Activated CD4-positive, alpha-beta memory T cell treated with anti-CD3 and anti-CD28 coated beads for 36 hours (primary cell): ENCODE measurements at regions of chr17 and their contacts with region 1.

Region 1: DNA sequence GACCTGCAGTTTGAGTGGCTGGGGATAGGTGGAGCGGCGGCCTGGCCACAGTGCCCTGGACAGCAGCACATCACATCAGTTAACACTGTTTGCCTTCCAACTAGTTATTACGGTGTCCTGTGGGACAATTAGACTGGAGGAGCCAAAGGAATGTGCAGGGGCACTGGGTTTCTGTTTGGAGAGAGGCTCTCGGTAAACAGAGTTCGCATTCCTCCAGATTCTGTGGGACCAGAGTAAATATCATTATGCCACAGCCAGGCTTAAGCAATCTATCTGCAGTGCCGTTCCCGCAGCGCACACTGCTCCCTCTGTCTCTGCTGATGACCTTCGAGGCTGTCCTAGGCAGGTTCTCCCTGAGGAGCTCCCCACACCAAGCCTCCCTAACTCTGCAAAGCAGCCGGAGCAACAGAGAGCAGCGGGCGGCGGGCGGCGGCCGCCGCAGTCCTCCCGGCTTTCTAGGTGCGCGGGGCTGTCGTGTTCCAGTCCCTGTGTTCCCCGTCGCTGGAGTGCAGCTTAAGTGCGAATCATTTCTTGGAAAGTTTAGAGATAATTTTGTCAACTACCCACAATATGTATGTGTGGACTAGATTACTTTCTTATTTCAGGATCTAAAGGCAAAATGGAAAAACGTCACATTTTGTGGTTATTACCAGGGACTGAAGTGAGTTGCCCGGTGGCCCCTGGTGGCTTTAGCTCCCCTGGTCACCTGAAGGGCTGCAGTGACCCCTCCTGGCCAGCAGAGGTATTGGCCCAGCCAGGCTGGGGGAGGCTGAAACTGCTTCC is 43.2 kb downstream of the PGS1 start:
- DNase-seq: peak; percentile 86
- H3K4me3 Mint-ChIP-seq: no peak overlapping the region
- H3K27ac Mint-ChIP-seq: peak overlapping the region; percentile 70
- H3K4me1 Mint-ChIP-seq: peaks cover 46% of the 10 kb centered on the region
- H3K27me3 Mint-ChIP-seq: no peaks in the 10 kb centered on the region

Region 2: GRCh38 chr17:78289802-78290363 is 131.8 kb before region 1 on chr17:
- CTCF ChIA-PET with region 1: interaction called, 32 read pairs
- POLR2A ChIA-PET with region 1: no interaction called
- intact Hi-C with region 1: no loop called
- DNase-seq: peak; percentile 84
- H3K4me3 Mint-ChIP-seq: no peak overlapping the region
- H3K27ac Mint-ChIP-seq: no peak overlapping the region
- H3K4me1 Mint-ChIP-seq: peaks cover 2% of the 10 kb centered on the region
- H3K27me3 Mint-ChIP-seq: no peaks in the 10 kb centered on the region

Region 3: DNA sequence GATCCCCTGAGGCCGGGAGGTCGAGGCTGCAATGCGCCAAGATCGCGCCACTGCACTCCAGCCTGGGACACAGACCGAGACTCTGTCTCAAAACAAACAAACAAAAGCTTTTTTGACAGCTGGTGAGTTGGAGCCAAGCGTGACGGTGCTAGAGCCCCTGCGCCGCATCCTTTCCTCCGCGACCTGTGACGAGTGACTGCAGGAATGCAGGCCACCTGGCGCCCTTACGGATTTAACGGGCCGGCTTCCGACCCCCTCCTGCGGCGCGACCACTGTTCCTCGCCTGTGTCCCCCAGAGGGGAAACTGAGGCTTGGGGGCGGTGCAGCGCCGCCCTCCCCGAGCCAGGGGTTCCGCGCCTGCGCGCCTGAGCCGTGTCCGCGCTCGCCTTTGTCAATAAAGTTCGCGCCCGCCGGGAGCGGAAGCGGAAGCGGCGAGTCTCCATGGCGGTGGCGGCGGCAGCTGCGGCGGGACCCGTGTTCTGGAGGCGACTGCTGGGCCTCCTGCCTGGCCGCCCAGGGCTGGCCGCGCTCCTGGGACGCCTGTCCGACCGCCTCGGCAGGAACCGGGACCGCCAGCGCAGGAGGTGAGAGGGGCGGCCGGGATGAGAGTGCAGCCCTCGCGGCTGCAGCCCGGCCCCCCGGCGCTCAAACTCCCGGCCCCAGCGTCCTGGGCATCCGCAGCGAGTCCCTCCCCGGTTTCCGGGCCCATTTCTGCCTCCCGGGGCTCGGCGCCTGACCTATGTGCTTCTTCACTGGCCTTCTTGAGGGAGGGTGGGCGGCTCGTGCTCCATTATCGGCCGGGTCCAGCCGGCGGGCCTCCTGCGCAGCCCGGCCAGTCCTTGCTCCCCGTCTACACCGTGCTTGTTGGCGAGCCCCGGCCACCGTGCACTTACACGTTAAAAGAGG is 43.2 kb before region 1 on chr17 and contains the start of gene PGS1:
- CTCF ChIA-PET with region 1: interaction called, 22 read pairs
- POLR2A ChIA-PET with region 1: interaction called, 3 read pairs
- intact Hi-C with region 1: no loop called
- DNase-seq: peak; percentile 89
- H3K4me3 Mint-ChIP-seq: peak within 1 kb of the TSS; percentile 99
- H3K27ac Mint-ChIP-seq: peak within 1 kb of the TSS; percentile 99
- H3K4me1 Mint-ChIP-seq: peaks cover 62% of the 10 kb centered on the region
- H3K27me3 Mint-ChIP-seq: peaks cover 2% of the 10 kb centered on the region
- total RNA-seq, gene PGS1: 75.8 to 78.1 TPM

Region 4: DNA sequence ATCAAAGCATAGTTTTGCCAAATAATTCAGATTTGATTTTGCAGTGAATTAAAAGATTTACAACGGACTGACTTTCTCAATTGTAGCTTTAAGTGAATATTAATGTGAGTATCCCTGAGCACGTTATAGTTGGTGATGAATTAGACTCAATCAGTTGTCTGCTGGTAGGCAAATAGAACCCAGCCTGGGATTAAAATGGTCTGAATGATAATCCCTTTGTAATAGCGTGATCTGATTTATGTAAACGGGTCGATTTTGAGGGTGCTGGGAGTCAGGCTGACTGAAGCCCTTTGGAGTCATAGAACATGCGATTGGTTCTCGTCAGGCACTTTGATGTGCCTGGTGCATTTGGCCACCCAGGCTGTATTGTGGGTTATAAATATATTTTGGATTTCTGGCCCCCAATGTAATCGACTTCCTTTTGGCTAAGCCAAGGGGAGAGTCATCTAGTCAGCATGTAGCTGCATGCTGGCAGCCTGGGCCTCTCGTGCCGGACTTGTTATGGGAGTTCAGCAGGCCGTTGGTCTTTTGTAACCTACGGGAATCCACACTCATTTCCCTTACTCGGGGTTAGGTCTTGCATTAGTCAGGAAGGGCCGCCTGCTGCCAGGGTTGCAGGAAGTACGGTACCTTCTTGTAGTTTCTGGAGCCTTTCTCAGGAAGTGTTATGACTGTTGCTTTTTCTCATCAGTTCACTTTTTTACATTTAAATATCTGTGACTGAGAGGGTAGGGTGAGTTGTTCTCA is 37.8 kb before region 1 on chr17:
- CTCF ChIA-PET with region 1: interaction called, 22 read pairs
- POLR2A ChIA-PET with region 1: interaction called, 3 read pairs
- intact Hi-C with region 1: no loop called
- DNase-seq: peak; percentile 88
- H3K4me3 Mint-ChIP-seq: peak overlapping the region; percentile 75
- H3K27ac Mint-ChIP-seq: peak overlapping the region; percentile 99
- H3K4me1 Mint-ChIP-seq: peaks cover 87% of the 10 kb centered on the region
- H3K27me3 Mint-ChIP-seq: peaks cover 1% of the 10 kb centered on the region